AG04450 (cell line): ENCODE measurements at regions of chr16 and their contacts with region 1.

Region 1: DNA sequence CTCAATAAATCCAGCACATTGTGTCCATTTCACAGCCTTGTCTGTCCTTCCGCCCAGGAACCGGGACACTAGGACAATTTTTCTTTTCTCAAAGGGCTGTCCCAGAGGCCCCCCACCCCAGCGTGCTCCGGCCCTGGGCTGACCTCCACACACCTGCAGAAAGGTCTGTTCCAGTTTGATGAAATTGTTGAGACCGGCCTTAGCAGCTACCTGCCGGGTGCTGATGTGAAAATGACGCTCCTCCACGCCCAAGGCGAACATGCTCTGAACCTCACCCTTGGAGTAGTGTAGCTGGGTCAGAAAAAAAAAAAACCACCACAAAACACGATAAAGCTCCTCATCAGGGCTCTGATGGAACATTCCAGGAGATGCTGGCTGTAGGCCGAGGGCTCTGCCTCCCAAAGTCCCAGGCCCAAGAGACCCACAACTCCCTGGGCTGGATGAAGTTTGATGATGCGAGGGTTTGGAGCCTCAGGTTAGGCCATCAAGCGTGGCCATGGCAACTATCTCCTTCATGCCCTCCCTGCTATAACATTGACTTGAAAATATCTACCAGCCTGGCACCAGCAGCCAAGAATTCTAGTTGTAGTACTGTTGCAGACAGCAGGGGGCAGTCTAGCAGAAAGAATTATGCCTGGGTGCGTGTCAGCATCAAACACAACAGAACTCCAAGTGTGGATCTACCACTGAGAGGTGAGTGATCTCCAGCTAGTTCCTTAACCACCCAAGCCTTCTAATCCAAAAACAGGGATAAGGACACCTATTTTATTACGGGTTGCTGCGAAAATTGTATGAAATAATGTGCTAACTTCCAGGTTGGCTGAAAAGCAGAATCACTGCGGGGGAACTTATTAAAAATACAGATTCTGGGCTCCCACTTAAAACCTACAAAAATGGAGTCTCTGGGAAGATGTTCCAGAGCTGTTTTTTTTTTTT is 62.1 kb downstream of the RMI2 start:
- DNase-seq: peak; percentile 39
- H3K4me3 ChIP-seq: no peak overlapping the region
- H3K27ac ChIP-seq: no peak overlapping the region
- H3K27me3 ChIP-seq: no peaks in the 10 kb centered on the region
- CTCF ChIP-seq: peak; percentile 75

Region 2: GRCh38 chr16:11396241-11397048 is 10.9 kb before region 1 on chr16:
- CTCF ChIA-PET with region 1: interaction called, 51 read pairs
- POLR2A ChIA-PET with region 1: no interaction called
- DNase-seq: peak; percentile 27
- H3K4me3 ChIP-seq: no peak overlapping the region
- H3K27ac ChIP-seq: no peak overlapping the region
- H3K27me3 ChIP-seq: no peaks in the 10 kb centered on the region
- CTCF ChIP-seq: peak; percentile 98

Region 3: DNA sequence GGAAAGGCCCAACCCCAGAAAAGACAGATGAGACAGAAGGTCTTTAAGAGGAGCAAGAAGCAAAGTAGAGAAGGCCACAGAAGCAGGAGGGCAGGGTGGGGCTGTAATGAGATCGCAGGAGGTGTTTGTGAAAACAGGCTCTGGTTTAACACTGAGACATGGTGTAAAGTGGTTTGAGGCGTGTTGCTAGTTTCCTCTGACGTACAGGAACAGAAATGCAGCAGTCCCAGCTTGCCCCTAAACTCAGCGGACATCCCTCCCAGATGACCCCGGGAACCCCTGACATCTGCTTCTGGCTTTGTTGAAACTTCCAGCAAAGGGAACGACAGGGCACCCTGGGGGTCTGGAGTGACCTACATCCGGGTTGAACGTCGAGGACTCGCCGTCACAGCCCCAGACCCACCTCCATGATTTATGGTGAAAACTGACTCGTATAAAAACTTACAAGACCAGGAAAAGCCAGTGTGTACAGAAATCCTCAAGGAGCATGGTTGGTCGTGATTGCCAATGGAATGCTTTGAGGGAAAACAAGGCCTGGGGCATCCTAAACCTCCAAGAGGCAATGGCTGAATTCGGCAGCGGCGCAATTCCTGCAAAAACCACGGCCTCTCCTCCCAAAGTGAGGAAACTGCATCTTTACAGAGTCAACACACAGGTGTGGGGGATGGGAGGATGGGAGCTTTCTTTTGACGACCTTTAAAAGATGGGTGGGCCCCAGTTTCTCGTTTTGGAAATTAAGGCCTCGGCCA is 153.6 kb after region 1 on chr16:
- CTCF ChIA-PET with region 1: no interaction called
- POLR2A ChIA-PET with region 1: interaction called, 12 read pairs
- DNase-seq: no peak
- H3K4me3 ChIP-seq: no peak overlapping the region
- H3K27ac ChIP-seq: peak overlapping the region; percentile 52
- H3K27me3 ChIP-seq: no peaks in the 10 kb centered on the region
- CTCF ChIP-seq: no peak

Region 4: DNA sequence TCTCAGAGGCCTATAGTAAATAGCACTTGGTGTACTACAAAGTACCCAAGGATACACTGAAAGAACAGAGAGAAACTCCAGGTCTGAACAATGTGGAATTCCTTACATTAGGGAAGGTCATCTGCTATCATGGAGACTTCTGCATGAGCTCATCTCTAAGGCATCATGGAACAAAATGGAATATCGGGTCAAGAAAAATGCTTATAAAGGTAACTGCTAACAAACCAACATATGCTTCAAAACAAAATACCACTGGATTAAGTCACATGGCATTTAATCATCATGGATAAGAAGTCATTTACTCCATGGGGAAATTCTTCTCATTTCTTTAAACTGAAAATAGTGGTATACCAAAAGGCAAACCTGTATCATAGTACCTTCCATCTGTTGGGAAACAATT is 301.1 kb after region 1 on chr16:
- CTCF ChIA-PET with region 1: interaction called, 14 read pairs
- POLR2A ChIA-PET with region 1: no interaction called
- DNase-seq: no peak
- H3K4me3 ChIP-seq: no peak overlapping the region
- H3K27ac ChIP-seq: no peak overlapping the region
- H3K27me3 ChIP-seq: no peaks in the 10 kb centered on the region
- CTCF ChIP-seq: no peak